Stomach (tissue), 19 donors: ENCODE measurements at regions of chr6 and their contacts with region 1.

Region 1: DNA sequence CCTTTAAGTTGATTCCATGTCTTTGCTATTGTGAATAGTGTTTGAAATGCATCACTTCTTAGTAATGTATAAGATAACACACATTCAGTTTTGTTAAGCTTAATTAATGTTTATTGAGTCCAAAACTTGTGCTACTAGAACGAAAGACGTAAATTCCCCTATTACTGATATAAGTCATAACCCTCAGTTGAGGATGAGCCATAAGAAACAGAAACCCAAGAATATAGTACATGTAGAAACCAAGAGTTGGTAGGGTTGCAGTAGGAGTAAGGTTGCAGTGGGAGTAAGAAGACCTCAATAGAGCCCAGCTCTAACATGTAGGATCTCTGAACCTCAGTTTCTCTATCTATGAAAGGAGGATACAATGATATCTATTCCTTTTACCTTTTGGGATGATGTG is 19.3 kb downstream of the CITED2 start:
- DNase-seq: no peak
- H3K4me3 ChIP-seq: no peak overlapping the region
- H3K27ac ChIP-seq: no peak overlapping the region
- H3K4me1 ChIP-seq: no peaks in the 10 kb centered on the region
- H3K27me3 ChIP-seq: no peaks in the 10 kb centered on the region
- CTCF ChIP-seq: no peak
- EP300 ChIP-seq: no peak
- POLR2A ChIP-seq: no peak

Region 2: DNA sequence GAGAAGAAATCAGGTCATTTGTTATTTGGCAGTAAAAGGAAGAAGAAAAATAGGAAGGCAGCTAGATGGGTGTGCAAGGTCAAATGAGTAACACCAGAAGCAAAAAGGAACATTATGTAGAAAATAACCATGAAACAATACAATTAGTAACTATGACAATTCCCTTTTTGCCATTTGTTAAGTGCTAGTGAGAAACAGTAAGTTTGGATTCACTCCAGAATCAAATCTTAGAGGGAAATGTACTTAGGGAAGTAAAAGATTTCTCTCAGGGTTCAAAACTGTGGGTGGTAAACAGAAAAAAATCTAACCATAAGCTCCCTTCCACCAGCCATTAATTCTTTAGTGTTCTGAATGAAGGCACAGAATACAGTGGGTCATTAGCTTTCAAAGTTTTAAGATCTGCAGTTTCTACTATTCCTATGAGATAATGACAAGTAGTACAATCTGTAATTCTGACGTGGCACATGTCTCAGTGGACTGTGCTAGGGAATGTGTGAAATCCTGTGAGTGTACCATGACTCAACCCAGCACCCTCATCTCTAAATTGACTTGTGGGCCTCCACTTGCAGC is 384.2 kb before region 1 on chr6:
- intact Hi-C with region 1: no loop called
- DNase-seq: no peak
- H3K4me3 ChIP-seq: no peak overlapping the region
- H3K27ac ChIP-seq: peak overlapping the region in 2 of 5 donors; percentile 11 to 67
- H3K4me1 ChIP-seq: peaks cover 30 to 87% (median 61%) of the 10 kb centered on the region in 4 donors
- H3K27me3 ChIP-seq: no peaks in the 10 kb centered on the region
- CTCF ChIP-seq: no peak
- EP300 ChIP-seq: no peak
- POLR2A ChIP-seq: no peak

Region 3: GRCh38 chr6:139124887-139125672 is 230.1 kb before region 1 on chr6:
- intact Hi-C with region 1: loop called (anchors 10 kb)
- DNase-seq: peak; percentile 69 to 81
- H3K4me3 ChIP-seq: no peak overlapping the region
- H3K27ac ChIP-seq: peak overlapping the region in 4 of 5 donors; percentile 18 to 58 (median 31)
- H3K4me1 ChIP-seq: no peaks in the 10 kb centered on the region
- H3K27me3 ChIP-seq: no peaks in the 10 kb centered on the region
- CTCF ChIP-seq: peak in 5 of 7 experiments; percentile 16 to 42 (median 27)
- EP300 ChIP-seq: no peak
- POLR2A ChIP-seq: no peak

Region 4: GRCh38 chr6:139230391-139230840 is 124.8 kb before region 1 on chr6:
- intact Hi-C with region 1: loop called (anchors 5 kb)
- DNase-seq: peak in 1 of 2 donors; percentile 63
- H3K4me3 ChIP-seq: no peak overlapping the region
- H3K27ac ChIP-seq: no peak overlapping the region
- H3K4me1 ChIP-seq: peaks cover 0 to 13% (median 7%) of the 10 kb centered on the region in 4 donors
- H3K27me3 ChIP-seq: no peaks in the 10 kb centered on the region
- CTCF ChIP-seq: no peak
- EP300 ChIP-seq: no peak
- POLR2A ChIP-seq: no peak

Region 5: DNA sequence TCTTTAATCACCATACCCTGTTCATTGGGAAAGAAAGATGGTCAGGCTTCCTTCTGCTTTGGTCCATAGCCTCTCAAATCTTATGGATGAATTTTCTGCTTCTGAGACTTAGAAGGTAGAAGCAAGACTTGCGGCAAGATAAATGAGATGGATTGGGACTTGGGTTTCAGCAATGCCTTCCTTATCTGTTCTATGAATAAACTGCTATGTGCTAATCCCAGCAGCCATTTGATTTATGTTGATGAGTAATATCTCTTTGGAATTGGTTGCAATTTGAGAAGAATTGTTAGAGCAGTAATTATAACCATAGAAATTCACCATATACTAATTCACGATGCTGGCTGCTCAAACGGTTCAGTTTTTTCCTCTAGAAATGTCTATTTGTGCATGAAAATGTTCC is 111.6 kb before region 1 on chr6:
- intact Hi-C with region 1: no loop called
- DNase-seq: no peak
- H3K4me3 ChIP-seq: no peak overlapping the region
- H3K27ac ChIP-seq: no peak overlapping the region
- H3K4me1 ChIP-seq: peaks cover 7 to 21% (median 14%) of the 10 kb centered on the region in 4 donors
- H3K27me3 ChIP-seq: no peaks in the 10 kb centered on the region
- CTCF ChIP-seq: no peak
- EP300 ChIP-seq: no peak
- POLR2A ChIP-seq: no peak

Region 6: GRCh38 chr6:139271056-139271455 is 84.1 kb before region 1 on chr6:
- intact Hi-C with region 1: no loop called
- DNase-seq: peak in 1 of 2 donors; percentile 46
- H3K4me3 ChIP-seq: no peak overlapping the region
- H3K27ac ChIP-seq: peak overlapping the region in 1 of 5 donors; percentile 30
- H3K4me1 ChIP-seq: no peaks in the 10 kb centered on the region
- H3K27me3 ChIP-seq: no peaks in the 10 kb centered on the region
- CTCF ChIP-seq: no peak
- EP300 ChIP-seq: no peak
- POLR2A ChIP-seq: no peak